ENCODE measurements at regions of chr6 and their contacts with region 1.

Region 1: DNA sequence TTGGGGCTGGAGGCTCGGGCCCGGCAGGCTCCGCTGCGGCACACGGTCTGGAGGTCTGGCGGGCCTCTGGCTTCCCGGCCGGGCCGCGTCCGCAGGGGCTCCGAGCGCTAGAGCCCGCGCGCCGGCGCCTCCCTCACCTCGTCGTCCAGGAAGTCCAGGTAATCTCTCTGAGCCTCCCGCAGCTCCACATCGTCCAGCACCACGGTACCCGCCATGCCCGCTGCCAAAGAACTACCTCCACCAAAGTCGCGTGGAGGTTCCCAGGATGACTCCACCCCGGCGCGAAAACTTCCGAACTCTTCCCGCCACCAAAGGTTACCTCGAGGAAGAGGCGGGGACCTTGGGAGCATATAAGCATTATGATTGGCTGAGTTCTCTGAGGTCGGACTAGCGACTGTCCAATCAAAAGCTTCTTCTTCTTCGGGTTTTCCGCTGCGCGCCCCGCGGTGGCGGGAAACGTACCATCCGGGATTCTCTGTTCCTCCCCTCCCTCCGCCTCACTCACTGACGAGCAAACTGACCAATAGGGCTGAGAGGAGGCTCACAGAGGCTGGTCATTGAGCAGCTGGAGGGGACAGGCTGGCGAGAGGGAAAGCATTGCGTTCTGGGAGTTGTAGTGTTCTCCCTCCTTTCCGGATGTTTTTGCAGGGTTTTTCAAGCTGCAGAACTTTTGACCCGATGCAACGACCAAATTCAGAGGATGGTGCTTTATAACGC is at the start of gene MCM3:
- DNase-seq: peak; percentile 99
- H3K4me3 ChIP-seq: peak within 1 kb of the TSS; percentile 62 to 88 (median 69)
- H3K27ac ChIP-seq: peak within 1 kb of the TSS; percentile 70 to 76 (median 75)
- H3K4me1 ChIP-seq: peaks cover 0 to 17% (median 12%) of the 10 kb centered on the region in 4 donors
- H3K27me3 ChIP-seq: no peaks in the 10 kb centered on the region
- CTCF ChIP-seq: no peak
- EP300 ChIP-seq: no peak
- POLR2A ChIP-seq: no peak
- total RNA-seq, gene MCM3: 31.0 to 36.8 (median 32.8) TPM

Region 2: DNA sequence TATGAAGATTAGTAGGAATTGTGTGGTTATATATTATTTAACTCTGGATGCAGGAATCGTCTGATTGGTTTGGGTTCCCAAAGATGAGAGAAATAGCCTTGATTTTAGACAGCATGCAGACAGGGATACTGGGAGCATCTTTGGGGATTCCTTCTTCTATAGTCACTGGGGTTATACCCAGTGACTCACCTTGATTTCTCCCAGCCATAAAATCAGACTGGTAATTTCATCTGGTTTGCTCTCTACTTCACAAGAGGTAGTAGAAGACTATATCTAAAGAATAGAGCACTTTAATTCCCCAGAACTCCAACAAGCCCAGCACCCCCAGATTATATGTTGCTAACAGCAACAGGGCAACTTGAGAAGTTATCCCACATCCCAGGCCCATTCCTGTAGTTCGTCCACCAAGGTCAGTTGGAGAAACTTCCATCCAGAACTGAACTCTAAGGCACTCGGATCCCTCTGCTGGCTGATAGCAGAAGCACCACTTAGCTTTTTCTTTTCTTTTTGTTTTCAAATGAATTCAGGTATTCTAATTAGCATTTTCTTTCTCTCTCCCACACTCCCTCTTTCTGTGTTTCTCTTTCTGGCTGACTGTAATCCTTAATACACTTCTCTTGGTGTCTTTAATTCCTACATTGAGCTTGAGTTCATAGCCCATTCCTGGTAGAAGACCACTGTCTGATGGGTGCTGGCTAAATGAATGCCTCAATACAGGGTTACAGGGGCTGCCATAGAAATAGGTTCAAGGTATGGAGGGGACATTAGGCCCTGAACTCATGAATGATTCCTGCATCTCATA is 115.1 kb after region 1 on chr6:
- intact Hi-C with region 1: loop called (anchors 2 kb)
- DNase-seq: no peak
- H3K4me3 ChIP-seq: no peak overlapping the region
- H3K27ac ChIP-seq: no peak overlapping the region
- H3K4me1 ChIP-seq: peaks cover 0 to 16% (median 8%) of the 10 kb centered on the region in 4 donors
- H3K27me3 ChIP-seq: no peaks in the 10 kb centered on the region
- CTCF ChIP-seq: peak; percentile 67 to 87 (median 79)
- EP300 ChIP-seq: no peak
- POLR2A ChIP-seq: no peak

Measured in sigmoid colon (tissue), 7 donors.